ENCODE measurements at regions of chr19 and their contacts with region 1.

Region 1: DNA sequence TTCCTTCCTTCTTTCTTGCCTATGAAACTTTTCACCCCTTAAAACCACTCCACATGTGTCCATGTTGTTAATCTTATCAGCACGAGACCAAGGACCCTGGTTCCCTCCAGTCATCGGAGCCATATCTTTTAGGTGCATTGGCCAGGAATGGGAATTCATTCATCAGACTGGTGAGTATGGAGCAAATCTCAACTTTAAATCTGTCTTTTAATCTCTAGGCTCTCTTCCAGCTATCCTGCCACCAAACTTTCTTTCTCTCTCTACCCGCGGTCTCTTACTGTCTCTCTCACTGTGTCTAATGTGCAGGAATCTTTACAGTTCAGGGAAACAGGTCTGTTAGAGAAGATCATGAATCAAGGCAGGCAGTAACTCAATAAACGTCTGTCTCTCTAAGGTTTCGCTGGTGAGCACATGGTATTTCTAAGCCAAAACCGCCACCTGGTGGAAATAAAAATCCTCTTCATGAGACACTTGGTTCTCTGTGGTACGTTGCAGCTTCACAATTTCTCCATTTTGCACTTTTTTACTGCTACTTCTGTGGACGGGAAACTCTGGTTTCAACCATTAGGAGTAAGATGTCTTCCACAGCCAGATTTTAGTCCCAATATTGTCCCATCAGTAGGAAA is 16.1 kb downstream of the LGALS16 start:
- DNase-seq: peak; percentile 31
- H3K4me3 ChIP-seq: no peak overlapping the region
- H3K27ac ChIP-seq: no peak overlapping the region
- H3K4me1 ChIP-seq: no peaks in the 10 kb centered on the region
- H3K27me3 ChIP-seq: peaks cover 2% of the 10 kb centered on the region
- CTCF ChIP-seq: peak; percentile 41 to 63

Region 2: DNA sequence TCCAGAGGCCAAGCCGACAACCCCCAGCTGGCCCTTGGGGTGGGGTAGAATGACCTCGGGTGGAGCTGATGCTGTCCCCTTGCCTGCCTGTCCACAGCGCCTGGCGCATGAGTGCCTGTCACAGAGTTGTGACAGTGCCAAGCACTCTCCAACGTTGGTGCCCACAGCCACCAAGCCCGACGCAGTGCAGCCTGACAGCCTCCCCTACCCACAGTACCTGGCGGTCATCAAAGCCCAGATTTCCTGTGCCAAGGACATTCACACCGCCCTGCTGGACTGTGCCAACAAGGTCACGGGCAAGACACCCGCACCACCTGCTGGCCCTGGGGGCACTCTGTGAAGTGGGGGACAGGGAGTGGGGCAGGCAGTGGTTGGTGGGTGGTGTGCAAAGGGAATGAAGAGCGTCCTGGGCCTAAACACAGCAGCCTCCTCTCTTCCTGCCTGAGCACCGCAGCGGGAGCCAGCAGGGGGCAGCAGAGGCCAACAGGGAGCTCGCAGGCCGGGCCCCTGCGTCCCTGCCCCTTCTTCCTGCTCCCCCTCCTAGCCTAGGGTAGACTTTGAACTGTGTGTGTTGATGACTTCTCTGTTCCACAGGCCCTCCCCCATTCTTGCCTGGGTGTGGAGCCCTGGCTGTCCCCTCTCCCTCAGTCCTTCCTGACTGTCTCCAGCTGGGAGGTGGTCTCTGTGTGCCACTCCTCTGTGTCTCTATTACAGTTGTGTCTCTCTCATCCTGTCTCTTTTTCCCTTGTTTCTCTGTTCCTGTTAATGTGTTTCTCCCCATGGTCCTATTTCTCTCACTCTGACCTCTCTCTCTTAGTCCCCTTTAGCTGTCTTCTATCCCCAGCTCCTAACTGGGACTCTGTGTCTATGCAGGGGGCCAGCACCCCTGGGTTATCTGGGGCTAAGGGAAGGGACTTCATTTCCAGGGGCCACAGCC is 274.2 kb before region 1 on chr19:
- CTCF ChIA-PET with region 1: no interaction called
- dilution Hi-C with region 1: no loop called
- in situ Hi-C with region 1: no loop called
- intact Hi-C with region 1: loop called (anchors 5 kb)
- DNase-seq: peak; percentile 75
- H3K4me3 ChIP-seq: no peak overlapping the region
- H3K27ac ChIP-seq: peak overlapping the region; percentile 97
- H3K4me1 ChIP-seq: peaks cover 32% of the 10 kb centered on the region
- H3K27me3 ChIP-seq: no peaks in the 10 kb centered on the region
- CTCF ChIP-seq: peak; percentile 97 to 99

Region 3: DNA sequence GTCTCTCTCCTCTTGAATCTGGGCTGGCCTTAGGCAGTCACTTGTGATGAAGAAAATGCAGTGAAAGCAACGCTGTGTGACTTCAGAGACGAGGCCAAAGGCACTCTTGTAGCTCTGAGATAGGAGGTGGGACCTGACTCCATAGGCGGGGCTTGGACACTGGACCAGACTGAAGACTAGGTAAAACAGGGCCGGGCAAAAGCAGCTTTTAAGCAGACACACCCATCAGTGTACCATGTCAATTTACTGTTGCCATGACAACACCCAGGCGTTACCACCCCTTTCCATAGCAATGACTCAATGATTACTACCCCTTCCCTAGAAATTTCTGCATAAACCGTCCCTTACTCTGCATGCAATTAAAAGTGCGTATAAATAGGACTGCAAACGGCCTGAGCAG is 125.3 kb before region 1 on chr19:
- CTCF ChIA-PET with region 1: no interaction called
- dilution Hi-C with region 1: no loop called
- in situ Hi-C with region 1: loop called (anchors 10 to 25 kb)
- intact Hi-C with region 1: loop called (anchors 1 kb)
- DNase-seq: peak; percentile 21
- H3K4me3 ChIP-seq: no peak overlapping the region
- H3K27ac ChIP-seq: no peak overlapping the region
- H3K4me1 ChIP-seq: peaks cover 25% of the 10 kb centered on the region
- H3K27me3 ChIP-seq: no peaks in the 10 kb centered on the region
- CTCF ChIP-seq: no peak

Region 4: GRCh38 chr19:39557441-39558151 is 114.3 kb before region 1 on chr19:
- CTCF ChIA-PET with region 1: no interaction called
- dilution Hi-C with region 1: no loop called
- in situ Hi-C with region 1: loop called (anchors 10 to 25 kb)
- intact Hi-C with region 1: no loop called
- DNase-seq: no peak
- H3K4me3 ChIP-seq: no peak overlapping the region
- H3K27ac ChIP-seq: no peak overlapping the region
- H3K4me1 ChIP-seq: no peaks in the 10 kb centered on the region
- H3K27me3 ChIP-seq: no peaks in the 10 kb centered on the region
- CTCF ChIP-seq: no peak

Region 5: GRCh38 chr19:39728040-39728439 is 56.2 kb after region 1 on chr19:
- CTCF ChIA-PET with region 1: no interaction called
- dilution Hi-C with region 1: loop called (anchors 5 kb)
- in situ Hi-C with region 1: no loop called
- intact Hi-C with region 1: no loop called
- DNase-seq: no peak
- H3K4me3 ChIP-seq: no peak overlapping the region
- H3K27ac ChIP-seq: no peak overlapping the region
- H3K4me1 ChIP-seq: no peaks in the 10 kb centered on the region
- H3K27me3 ChIP-seq: no peaks in the 10 kb centered on the region
- CTCF ChIP-seq: no peak

Region 6: DNA sequence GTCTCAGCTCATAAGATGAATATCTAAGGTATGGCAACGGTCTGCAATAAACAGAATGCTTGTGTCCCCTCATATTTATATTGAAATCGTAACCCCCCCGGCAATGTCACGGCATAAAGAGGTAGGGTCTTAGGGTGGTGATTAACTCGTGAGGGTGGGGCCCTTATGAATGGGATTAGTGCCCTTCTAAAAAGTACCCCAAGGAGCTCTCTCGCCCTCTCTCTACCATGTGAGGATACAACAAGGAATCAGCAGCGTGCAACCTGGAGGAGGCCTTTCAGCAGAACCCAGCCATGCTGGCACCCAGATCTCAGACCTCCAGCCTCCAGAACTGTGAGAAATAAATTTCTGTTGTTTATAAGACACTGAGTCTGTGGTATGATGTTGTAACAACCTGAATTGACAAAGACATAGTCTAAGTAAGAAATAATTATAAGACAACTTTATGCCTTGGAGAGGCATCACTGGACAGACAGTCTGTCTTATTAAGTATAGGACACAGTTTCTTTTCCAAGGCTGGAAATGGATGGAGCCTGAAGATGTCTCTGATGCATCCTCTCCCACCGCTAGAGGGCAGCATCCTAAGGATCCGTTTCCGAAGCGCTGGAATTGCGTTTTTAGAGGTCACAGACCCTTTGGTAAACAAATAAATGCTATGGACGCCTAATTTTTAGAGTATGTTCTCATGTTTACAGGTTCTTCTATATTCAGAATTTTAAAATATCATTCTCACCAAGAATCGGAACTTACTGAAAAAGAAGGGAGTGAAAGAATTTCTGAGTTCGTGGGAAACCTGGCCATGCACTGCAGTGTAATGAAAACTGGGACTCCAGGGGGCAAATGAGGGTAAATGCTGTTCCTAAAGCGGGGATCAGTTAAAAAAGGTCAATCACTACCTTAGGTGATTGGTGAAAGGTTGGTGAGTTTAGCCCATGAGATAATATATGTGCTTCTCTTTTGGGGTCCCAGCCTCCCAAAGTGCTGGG is 93.5 kb after region 1 on chr19:
- CTCF ChIA-PET with region 1: no interaction called
- dilution Hi-C with region 1: no loop called
- in situ Hi-C with region 1: no loop called
- intact Hi-C with region 1: loop called (anchors 2 kb)
- DNase-seq: peak; percentile 13
- H3K4me3 ChIP-seq: no peak overlapping the region
- H3K27ac ChIP-seq: no peak overlapping the region
- H3K4me1 ChIP-seq: no peaks in the 10 kb centered on the region
- H3K27me3 ChIP-seq: no peaks in the 10 kb centered on the region
- CTCF ChIP-seq: peak; percentile 80 to 83